ENCODE measurements at regions of chr2 and their contacts with region 1.

Region 1: GRCh38 chr2:74037379-74037860 is 52.7 kb downstream of the TET3 start:
- DNase-seq: peak; percentile 78 to 96 (median 91)
- H3K4me3 ChIP-seq: peak overlapping the region in 1 of 3 experiments; percentile 58
- H3K4me3 Mint-ChIP-seq: peak overlapping the region; percentile 0 to 88
- H3K27ac ChIP-seq: peak overlapping the region; percentile 56 to 79
- H3K27ac Mint-ChIP-seq: peak overlapping the region; percentile 87 to 96 (median 94)
- H3K4me1 ChIP-seq: peaks cover 80 to 86% of the 10 kb centered on the region in 2 donors
- H3K4me1 Mint-ChIP-seq: peaks cover 93% of the 10 kb centered on the region
- H3K27me3 ChIP-seq: no peaks in the 10 kb centered on the region
- H3K27me3 Mint-ChIP-seq: peaks cover 0 to 3% (median 1%) of the 10 kb centered on the region in 3 donors
- CTCF ChIP-seq: no peak

Region 2: DNA sequence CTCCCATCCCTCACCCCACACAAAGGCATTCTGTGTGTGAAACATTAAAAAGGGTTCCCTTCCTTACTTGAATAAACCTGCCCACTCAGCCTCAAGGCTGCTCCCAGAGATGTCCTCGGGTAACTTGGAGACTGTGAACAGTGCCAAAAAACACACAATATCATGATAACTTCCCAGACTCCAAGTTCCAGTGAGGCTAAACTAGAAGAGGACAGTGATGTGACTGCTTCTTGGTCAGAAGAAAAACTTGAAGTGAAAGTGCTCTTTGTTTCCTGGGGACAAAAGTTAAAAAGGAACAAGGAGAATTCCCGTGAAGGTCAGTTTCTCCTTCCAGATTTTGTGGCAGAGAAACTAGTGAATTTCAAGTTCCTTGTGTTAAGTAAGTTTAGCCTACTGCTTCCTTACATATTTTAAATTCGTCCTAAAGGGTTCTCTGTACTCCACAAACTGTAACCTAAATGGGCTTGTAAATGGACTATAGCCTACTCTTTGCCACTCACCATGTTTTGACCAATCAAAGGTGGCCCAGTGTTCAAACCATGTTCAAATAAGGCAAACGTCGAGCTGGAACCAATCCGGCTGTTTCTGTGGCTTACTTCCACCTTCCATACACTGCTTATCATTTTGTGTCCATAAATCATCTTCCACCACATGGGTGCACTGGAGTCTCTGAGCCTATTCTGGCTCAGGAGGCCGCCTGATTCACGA is 320.7 kb before region 1 on chr2:
- intact Hi-C with region 1: no loop called
- DNase-seq: peak; percentile 10 to 52 (median 39)
- H3K4me3 ChIP-seq: peak overlapping the region in 2 of 3 experiments; percentile 26 to 58
- H3K4me3 Mint-ChIP-seq: peak overlapping the region; percentile 67 to 72
- H3K27ac ChIP-seq: peak overlapping the region; percentile 31 to 72
- H3K27ac Mint-ChIP-seq: peak overlapping the region; percentile 31 to 82 (median 70)
- H3K4me1 ChIP-seq: peaks cover 21 to 23% of the 10 kb centered on the region in 2 donors
- H3K4me1 Mint-ChIP-seq: peaks cover 22% of the 10 kb centered on the region
- H3K27me3 ChIP-seq: no peaks in the 10 kb centered on the region
- H3K27me3 Mint-ChIP-seq: peaks cover 0 to 3% (median 2%) of the 10 kb centered on the region in 3 donors
- CTCF ChIP-seq: no peak

Region 3: GRCh38 chr2:73993376-73994145 is 43.9 kb before region 1 on chr2:
- intact Hi-C with region 1: loop called in 1 of 2 experiments (anchors 5 kb)
- DNase-seq: no peak
- H3K4me3 ChIP-seq: no peak overlapping the region
- H3K4me3 Mint-ChIP-seq: peak overlapping the region in 1 of 2 donors; percentile 4
- H3K27ac ChIP-seq: peak overlapping the region in 1 of 2 donors; percentile 52
- H3K27ac Mint-ChIP-seq: peak overlapping the region; percentile 36 to 86 (median 63)
- H3K4me1 ChIP-seq: peaks cover 33 to 55% of the 10 kb centered on the region in 2 donors
- H3K4me1 Mint-ChIP-seq: peaks cover 89% of the 10 kb centered on the region
- H3K27me3 ChIP-seq: no peaks in the 10 kb centered on the region
- H3K27me3 Mint-ChIP-seq: peaks cover 0 to 3% (median 0%) of the 10 kb centered on the region in 3 donors
- CTCF ChIP-seq: no peak

Measured in CD14-positive monocyte (primary cell).